Activated T-helper 2 cell treated with anti-CD3 and anti-CD28 coated beads, Interferon-gamma antibody, Interleukin-2, Interleukin-4, amounts not matched to agents 10 μg/mL and 5 μg/mL and 100 μg/mL, durations not matched to agents 14 hours and 24 hours and 36 hours (primary cell): ENCODE measurements at regions of chr4 and their contacts with region 1.

Region 1: GRCh38 chr4:12674184-12674583 is 810.0 kb downstream of the RAB28 start:
- DNase-seq: no peak
- H3K4me3 Mint-ChIP-seq: no peak overlapping the region
- H3K27ac Mint-ChIP-seq: no peak overlapping the region
- H3K4me1 Mint-ChIP-seq: no peaks in the 10 kb centered on the region
- H3K27me3 Mint-ChIP-seq: no peaks in the 10 kb centered on the region

Region 2: DNA sequence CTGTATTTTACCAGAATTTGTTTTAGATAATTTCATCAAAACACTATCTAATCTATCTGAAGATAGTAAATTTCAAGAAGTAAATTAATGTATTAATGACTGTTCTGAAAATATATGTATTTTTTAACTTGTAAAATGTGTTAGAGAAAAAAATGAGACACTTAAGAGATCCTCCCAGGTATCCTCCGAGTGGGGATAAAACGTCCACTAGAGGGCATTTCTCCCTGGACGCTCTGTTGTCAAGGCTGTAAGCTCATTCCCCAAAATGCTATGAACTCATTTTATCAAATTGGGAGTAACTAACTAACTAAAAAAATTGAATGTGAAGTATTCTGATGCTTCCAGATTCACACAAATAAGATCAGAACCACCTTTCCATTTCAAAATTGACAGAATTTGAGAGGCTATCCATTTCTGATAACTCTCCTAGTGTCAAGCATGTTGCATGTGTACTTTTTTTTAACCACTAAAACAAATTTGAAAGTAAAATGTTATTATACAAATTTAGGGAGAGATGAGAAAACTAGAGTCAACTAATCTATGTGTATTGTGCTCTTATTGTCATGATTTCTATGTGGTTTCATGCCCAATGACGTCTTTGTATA is 908.2 kb before region 1 on chr4:
- intact Hi-C with region 1: no loop called
- DNase-seq: no peak
- H3K4me3 Mint-ChIP-seq: no peak overlapping the region
- H3K27ac Mint-ChIP-seq: no peak overlapping the region
- H3K4me1 Mint-ChIP-seq: no peaks in the 10 kb centered on the region
- H3K27me3 Mint-ChIP-seq: no peaks in the 10 kb centered on the region

Region 3: GRCh38 chr4:12538162-12538561 is 136.0 kb before region 1 on chr4:
- intact Hi-C with region 1: no loop called
- DNase-seq: no peak
- H3K4me3 Mint-ChIP-seq: no peak overlapping the region
- H3K27ac Mint-ChIP-seq: no peak overlapping the region
- H3K4me1 Mint-ChIP-seq: no peaks in the 10 kb centered on the region
- H3K27me3 Mint-ChIP-seq: no peaks in the 10 kb centered on the region

Region 4: DNA sequence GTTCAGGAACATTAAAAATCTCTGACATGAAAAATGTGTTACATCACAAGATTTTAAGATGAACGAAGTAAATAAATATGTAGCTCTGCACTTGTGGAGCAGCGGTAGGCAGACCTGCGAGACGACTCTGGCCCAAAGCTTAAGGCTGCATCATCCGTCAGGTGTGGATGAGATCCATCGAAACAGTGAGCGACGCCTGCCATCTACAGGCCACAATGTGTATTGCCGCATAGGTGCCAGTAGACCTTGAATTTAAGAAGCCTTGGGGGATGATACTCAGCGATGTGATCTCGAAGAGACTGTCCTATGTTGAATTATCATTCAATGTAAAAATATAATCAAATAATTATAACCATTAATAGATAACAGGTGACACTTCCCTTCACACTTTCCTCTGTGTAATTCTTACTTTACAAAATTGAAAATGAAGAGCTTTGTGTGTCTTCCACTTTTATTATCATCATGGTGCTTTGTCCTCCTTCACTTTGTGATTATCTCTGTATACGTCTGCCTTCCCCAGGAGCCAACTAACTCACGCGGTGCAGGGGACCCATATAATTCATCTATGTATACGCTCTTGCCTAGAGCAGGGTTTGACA is 41.0 kb before region 1 on chr4:
- intact Hi-C with region 1: no loop called
- DNase-seq: peak; percentile 53
- H3K4me3 Mint-ChIP-seq: no peak overlapping the region
- H3K27ac Mint-ChIP-seq: no peak overlapping the region
- H3K4me1 Mint-ChIP-seq: no peaks in the 10 kb centered on the region
- H3K27me3 Mint-ChIP-seq: no peaks in the 10 kb centered on the region

Region 5: DNA sequence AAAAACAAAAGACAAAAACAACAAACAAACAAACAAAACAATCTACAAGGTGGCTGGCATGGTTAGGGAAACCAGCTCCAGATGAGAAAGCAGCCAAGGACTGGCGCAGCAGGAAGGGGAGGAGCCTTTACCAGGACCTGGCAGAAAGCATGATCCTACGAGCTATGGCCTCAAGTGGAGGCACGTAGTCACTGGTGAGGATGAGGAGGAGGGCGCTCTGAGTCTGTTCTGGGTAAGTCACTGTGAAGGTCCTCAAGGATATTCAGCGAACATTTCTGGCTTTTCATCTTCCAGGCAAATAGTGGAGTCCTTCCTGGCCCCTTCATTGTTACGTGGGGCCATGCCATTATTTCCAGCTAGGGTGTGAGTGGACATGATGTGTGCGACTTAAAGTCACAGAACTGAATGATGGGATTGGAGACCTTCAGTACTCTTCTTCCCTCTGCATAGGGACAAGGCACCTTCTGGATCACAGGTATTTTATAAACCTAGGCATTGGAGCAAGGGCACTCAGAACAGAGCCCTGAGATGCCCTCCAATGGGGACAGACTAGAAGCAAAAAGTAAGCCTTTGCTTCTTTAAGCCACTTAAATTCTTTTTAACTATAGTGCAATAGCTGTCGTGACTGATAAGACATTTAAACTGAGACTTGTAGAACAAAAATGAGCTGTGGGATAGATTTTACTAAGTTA is 38.6 kb after region 1 on chr4:
- intact Hi-C with region 1: loop called (anchors 5 kb)
- DNase-seq: no peak
- H3K4me3 Mint-ChIP-seq: no peak overlapping the region
- H3K27ac Mint-ChIP-seq: no peak overlapping the region
- H3K4me1 Mint-ChIP-seq: no peaks in the 10 kb centered on the region
- H3K27me3 Mint-ChIP-seq: no peaks in the 10 kb centered on the region

Region 6: GRCh38 chr4:12723849-12724447 is 49.8 kb after region 1 on chr4:
- intact Hi-C with region 1: no loop called
- DNase-seq: no peak
- H3K4me3 Mint-ChIP-seq: no peak overlapping the region
- H3K27ac Mint-ChIP-seq: no peak overlapping the region
- H3K4me1 Mint-ChIP-seq: no peaks in the 10 kb centered on the region
- H3K27me3 Mint-ChIP-seq: peaks cover 3% of the 10 kb centered on the region